ENCODE measurements at regions of chr10 and their contacts with region 1.

Region 1: DNA sequence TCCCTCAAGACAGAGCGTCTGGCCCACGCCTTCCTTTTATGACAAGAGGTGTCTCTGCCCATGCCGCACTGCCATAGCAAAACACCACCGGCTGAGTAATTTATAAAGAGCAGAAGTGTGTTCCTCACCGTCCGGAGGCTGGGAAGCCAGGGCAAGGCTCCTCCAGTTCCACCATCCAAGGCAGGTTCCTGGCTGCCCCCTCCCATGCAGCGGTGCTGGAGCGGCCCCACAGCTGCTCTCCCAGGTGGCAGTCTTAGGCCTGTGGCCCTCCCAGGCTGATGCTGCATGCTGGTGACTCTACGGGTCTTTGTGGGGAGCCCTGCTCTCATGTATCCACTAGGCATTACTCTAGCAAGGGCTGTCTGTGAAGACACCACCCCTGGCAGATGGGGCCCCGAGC is 113.1 kb downstream of the TCERG1L start:
- DNase-seq: no peak
- H3K4me3 ChIP-seq: no peak overlapping the region
- H3K27ac ChIP-seq: no peak overlapping the region
- H3K4me1 ChIP-seq: no peaks in the 10 kb centered on the region
- H3K27me3 ChIP-seq: no peaks in the 10 kb centered on the region
- CTCF ChIP-seq: no peak
- EP300 ChIP-seq: no peak
- POLR2A ChIP-seq: no peak

Region 2: DNA sequence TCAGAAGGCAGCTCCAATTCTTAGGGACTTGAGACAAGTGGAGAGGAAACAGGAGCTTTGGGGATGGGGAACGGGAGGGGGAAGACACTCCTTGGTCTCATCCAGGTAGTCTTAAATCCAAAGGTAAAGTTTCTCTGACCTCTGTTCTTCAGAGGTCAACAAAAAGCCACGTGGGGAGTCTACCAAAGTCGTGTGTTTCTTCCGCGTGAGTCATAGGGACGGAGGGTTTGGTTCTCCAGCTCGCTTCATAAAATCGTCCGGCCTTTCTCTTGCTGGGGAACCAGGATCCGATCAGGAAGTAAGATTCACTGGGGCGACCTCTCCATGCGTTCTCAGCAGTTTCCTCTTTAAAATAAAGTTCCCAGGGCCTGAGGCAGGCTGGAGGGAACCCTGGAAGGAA is 162.6 kb before region 1 on chr10:
- in situ Hi-C with region 1: no loop called
- intact Hi-C with region 1: loop called (anchors 5 kb)
- DNase-seq: no peak
- H3K4me3 ChIP-seq: no peak overlapping the region
- H3K27ac ChIP-seq: no peak overlapping the region
- H3K4me1 ChIP-seq: no peaks in the 10 kb centered on the region
- H3K27me3 ChIP-seq: no peaks in the 10 kb centered on the region
- CTCF ChIP-seq: no peak
- EP300 ChIP-seq: no peak
- POLR2A ChIP-seq: no peak